IMR-90 (cell line): ENCODE measurements at regions of chr11 and their contacts with region 1.

Region 1: GRCh38 chr11:118791111-118791965 is at the start of gene DDX6:
- DNase-seq: peak; percentile 86
- ATAC-seq: peak; percentile 75
- H3K4me3 ChIP-seq: peak within 1 kb of the TSS; percentile 97
- H3K27ac ChIP-seq: peak within 1 kb of the TSS; percentile 98
- H3K4me1 ChIP-seq: no peaks in the 10 kb centered on the region
- H3K27me3 ChIP-seq: no peaks in the 10 kb centered on the region
- CTCF ChIP-seq: peak; percentile 50
- POLR2A ChIP-seq: peak; percentile 94
- RAD21 ChIP-seq: peak; percentile 9; the same call in 1 of the 2 replicates
- total RNA-seq, gene DDX6: 197 and 225 TPM in 2 replicates

Region 2: GRCh38 chr11:118804094-118804493 is 12.8 kb after region 1 on chr11:
- CTCF ChIA-PET with region 1: interaction called, 6 read pairs
- POLR2A ChIA-PET with region 1: interaction called, 12 read pairs
- dilution Hi-C with region 1: no loop called
- in situ Hi-C with region 1: no loop called
- intact Hi-C with region 1: no loop called
- DNase-seq: no peak
- ATAC-seq: no peak
- H3K4me3 ChIP-seq: no peak overlapping the region
- H3K27ac ChIP-seq: no peak overlapping the region
- H3K4me1 ChIP-seq: no peaks in the 10 kb centered on the region
- H3K27me3 ChIP-seq: peaks cover 17% of the 10 kb centered on the region
- CTCF ChIP-seq: no peak
- POLR2A ChIP-seq: no peak
- RAD21 ChIP-seq: no peak

Region 3: GRCh38 chr11:118928108-118928870 is 137.0 kb after region 1 on chr11:
- CTCF ChIA-PET with region 1: interaction called, 4 read pairs
- POLR2A ChIA-PET with region 1: interaction called, 7 read pairs
- dilution Hi-C with region 1: no loop called
- in situ Hi-C with region 1: no loop called
- intact Hi-C with region 1: loop called (anchors 1 kb)
- DNase-seq: peak; percentile 92
- ATAC-seq: peak; percentile 68
- H3K4me3 ChIP-seq: peak overlapping the region; percentile 69
- H3K27ac ChIP-seq: peak overlapping the region; percentile 88
- H3K4me1 ChIP-seq: peaks cover 3% of the 10 kb centered on the region; the same call in 1 of the 2 replicates
- H3K27me3 ChIP-seq: no peaks in the 10 kb centered on the region
- CTCF ChIP-seq: peak; percentile 88
- POLR2A ChIP-seq: no peak
- RAD21 ChIP-seq: peak; percentile 81

Region 4: GRCh38 chr11:118939953-118940598 is 148.7 kb after region 1 on chr11:
- CTCF ChIA-PET with region 1: no interaction called
- POLR2A ChIA-PET with region 1: no interaction called
- dilution Hi-C with region 1: no loop called
- in situ Hi-C with region 1: no loop called
- intact Hi-C with region 1: no loop called
- DNase-seq: no peak
- ATAC-seq: peak; percentile 70
- H3K4me3 ChIP-seq: no peak overlapping the region
- H3K27ac ChIP-seq: no peak overlapping the region
- H3K4me1 ChIP-seq: peaks cover 4% of the 10 kb centered on the region; the same call in 1 of the 2 replicates
- H3K27me3 ChIP-seq: peaks cover 2% of the 10 kb centered on the region
- CTCF ChIP-seq: no peak
- POLR2A ChIP-seq: no peak
- RAD21 ChIP-seq: no peak

Region 5: GRCh38 chr11:118956094-118956846 is 164.9 kb after region 1 on chr11 and contains the start of gene UPK2:
- CTCF ChIA-PET with region 1: no interaction called
- POLR2A ChIA-PET with region 1: no interaction called
- dilution Hi-C with region 1: no loop called
- in situ Hi-C with region 1: no loop called
- intact Hi-C with region 1: loop called (anchors 1 kb)
- DNase-seq: peak; percentile 71
- ATAC-seq: peak; percentile 100
- H3K4me3 ChIP-seq: no peak within 1 kb of the TSS
- H3K27ac ChIP-seq: no peak within 1 kb of the TSS
- H3K4me1 ChIP-seq: no peaks in the 10 kb centered on the region
- H3K27me3 ChIP-seq: peaks cover 51% of the 10 kb centered on the region
- CTCF ChIP-seq: peak; percentile 97
- POLR2A ChIP-seq: peak; percentile 57; the same call in 1 of the 2 replicates
- RAD21 ChIP-seq: peak; percentile 98
- total RNA-seq, gene UPK2: not detected in 2 replicates